Activated CD4-positive, alpha-beta memory T cell treated with anti-CD3 and anti-CD28 coated beads for 36 hours (primary cell): ENCODE measurements at regions of chr2 and their contacts with region 1.

Region 1: DNA sequence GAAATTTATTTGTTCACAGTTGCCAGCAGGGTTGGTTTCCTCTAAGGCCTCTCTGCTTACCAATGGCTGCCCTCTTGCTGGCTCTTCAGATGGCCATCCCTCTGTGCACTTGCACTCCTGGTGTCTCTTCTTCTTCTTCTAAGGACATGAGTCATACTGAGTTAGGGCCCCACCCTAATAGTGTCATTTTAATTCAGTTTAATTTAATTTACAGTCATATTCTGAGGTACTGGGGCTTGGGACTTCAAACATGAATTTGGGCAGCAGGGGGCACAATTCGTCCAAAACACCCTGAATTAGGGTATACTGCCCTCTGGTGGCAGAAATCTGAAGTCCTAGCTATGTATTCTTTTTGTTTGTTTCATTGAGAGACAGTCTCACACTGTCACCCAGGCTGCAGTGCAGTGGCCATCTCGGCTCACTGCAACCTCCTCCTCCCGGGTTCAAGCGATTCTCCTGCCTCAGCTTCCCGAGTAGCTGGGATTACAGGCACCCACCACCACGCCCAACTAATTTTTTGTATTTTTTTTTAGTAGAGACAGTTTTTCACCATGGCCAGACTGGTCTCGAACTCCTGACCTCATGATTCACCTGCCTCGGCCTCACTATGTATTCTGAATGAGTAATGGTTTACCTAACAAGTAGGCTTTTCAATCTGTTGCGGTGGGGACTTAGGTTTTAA is 19.8 kb downstream of the SLC4A1AP start:
- DNase-seq: peak; percentile 90
- H3K4me3 Mint-ChIP-seq: no peak overlapping the region
- H3K27ac Mint-ChIP-seq: peak overlapping the region; percentile 76
- H3K4me1 Mint-ChIP-seq: peaks cover 41% of the 10 kb centered on the region
- H3K27me3 Mint-ChIP-seq: no peaks in the 10 kb centered on the region

Region 2: DNA sequence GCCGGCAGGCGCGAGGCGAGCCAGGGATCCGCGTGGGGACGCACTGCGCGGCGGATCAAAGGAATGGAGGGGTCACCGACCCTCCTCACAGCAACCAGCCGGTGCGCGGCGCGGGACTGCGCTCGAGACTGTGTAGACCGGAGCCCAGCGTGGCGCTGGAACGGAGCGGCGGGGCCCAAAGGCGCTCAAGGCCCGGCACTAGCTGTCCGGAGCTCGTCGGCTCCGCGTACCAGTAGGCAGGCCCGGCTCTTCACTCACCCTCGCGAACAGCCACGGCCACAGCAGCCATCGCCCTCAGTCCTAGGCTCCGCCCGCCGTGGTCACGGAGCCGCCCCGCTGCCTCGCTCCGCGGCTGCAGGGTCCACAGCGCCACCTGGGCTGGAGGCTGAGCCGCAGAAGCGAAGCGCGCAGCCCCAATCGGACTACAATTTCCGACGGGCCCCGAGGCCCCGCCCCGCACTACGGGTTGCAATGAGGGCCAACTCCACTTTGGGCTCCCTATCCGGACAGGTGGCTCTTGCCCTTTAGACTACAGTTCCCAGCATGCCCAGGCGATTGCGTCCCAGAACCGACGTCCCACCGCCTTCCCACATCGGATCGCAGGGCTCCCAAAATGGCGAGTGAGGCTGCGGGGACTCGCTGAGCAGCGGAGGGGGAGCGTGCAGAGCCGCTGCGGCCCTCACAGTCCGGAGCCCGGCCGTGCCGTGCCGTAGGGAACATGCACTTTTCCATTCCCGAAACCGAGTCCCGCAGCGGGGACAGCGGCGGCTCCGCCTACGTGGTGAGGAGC is 313.3 kb before region 1 on chr2 and contains the starts of genes EIF2B4 and SNX17:
- CTCF ChIA-PET with region 1: interaction called, 38 read pairs
- POLR2A ChIA-PET with region 1: no interaction called
- intact Hi-C with region 1: loop called (anchors 2 kb)
- DNase-seq: peak; percentile 100
- H3K4me3 Mint-ChIP-seq: peak within 1 kb of the TSS; percentile 87
- H3K27ac Mint-ChIP-seq: peak within 1 kb of the TSS; percentile 96
- H3K4me1 Mint-ChIP-seq: peaks cover 29% of the 10 kb centered on the region
- H3K27me3 Mint-ChIP-seq: no peaks in the 10 kb centered on the region
- total RNA-seq, gene EIF2B4: 34.6 to 36.5 TPM
- total RNA-seq, gene SNX17: 91.2 to 93.2 TPM

Region 3: GRCh38 chr2:27428213-27428977 is 255.1 kb before region 1 on chr2 and contains the start of gene NRBP1:
- CTCF ChIA-PET with region 1: interaction called, 53 read pairs
- POLR2A ChIA-PET with region 1: interaction called, 3 read pairs
- intact Hi-C with region 1: loop called (anchors 1 kb)
- DNase-seq: peak; percentile 94
- H3K4me3 Mint-ChIP-seq: peak within 1 kb of the TSS; percentile 99
- H3K27ac Mint-ChIP-seq: peak within 1 kb of the TSS; percentile 98
- H3K4me1 Mint-ChIP-seq: peaks cover 35% of the 10 kb centered on the region
- H3K27me3 Mint-ChIP-seq: no peaks in the 10 kb centered on the region
- total RNA-seq, gene NRBP1: 80.8 to 82.7 TPM

Region 4: GRCh38 chr2:27566628-27567027 is 116.9 kb before region 1 on chr2:
- CTCF ChIA-PET with region 1: no interaction called
- POLR2A ChIA-PET with region 1: no interaction called
- intact Hi-C with region 1: no loop called
- DNase-seq: no peak
- H3K4me3 Mint-ChIP-seq: no peak overlapping the region
- H3K27ac Mint-ChIP-seq: no peak overlapping the region
- H3K4me1 Mint-ChIP-seq: no peaks in the 10 kb centered on the region
- H3K27me3 Mint-ChIP-seq: peaks cover 38% of the 10 kb centered on the region

Region 5: GRCh38 chr2:27638037-27638637 is 45.4 kb before region 1 on chr2:
- CTCF ChIA-PET with region 1: interaction called, 48 read pairs
- POLR2A ChIA-PET with region 1: interaction called, 15 read pairs
- intact Hi-C with region 1: loop called (anchors 1 kb)
- DNase-seq: no peak
- H3K4me3 Mint-ChIP-seq: peak overlapping the region; percentile 33
- H3K27ac Mint-ChIP-seq: peak overlapping the region; percentile 99
- H3K4me1 Mint-ChIP-seq: peaks cover 35% of the 10 kb centered on the region
- H3K27me3 Mint-ChIP-seq: no peaks in the 10 kb centered on the region

Region 6: DNA sequence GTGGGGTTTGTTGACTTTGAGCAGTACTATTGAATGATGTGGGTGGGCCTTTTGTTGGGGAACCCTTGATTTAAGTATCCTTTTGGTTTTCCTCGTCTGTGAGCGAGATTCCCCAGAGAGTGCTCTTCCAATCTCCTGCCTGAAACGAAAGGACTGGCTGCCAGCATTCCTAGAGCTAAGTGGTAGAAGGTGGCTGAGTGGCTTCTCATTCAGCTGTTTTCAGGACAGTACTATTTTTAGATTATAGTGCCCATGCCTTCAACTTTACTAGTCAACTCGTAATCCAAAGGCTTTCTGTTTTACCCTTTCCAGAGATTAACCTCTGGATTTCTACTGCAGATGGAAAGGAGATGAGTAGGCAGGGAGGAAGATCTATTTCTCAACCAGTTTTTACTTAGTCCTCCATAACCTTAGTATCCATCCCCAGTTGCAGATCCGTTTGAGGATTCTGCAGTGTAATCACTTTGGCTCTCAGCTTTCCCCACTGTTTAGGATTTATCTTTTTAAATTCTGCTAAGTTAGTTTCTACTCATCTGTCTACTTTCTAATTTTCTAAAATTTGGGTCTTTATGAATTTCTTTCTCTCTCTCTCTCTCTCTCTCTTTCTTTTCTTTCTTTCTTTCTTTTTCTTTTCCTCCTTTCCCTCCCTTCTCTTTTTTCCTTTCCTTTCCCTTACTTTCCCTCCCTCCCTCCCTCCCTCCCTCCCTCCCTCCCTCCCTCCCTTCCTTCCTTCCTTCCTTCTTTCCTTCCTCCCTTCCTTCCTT is 10.6 kb before region 1 on chr2:
- CTCF ChIA-PET with region 1: interaction called, 24 read pairs
- POLR2A ChIA-PET with region 1: no interaction called
- intact Hi-C with region 1: no loop called
- DNase-seq: no peak
- H3K4me3 Mint-ChIP-seq: no peak overlapping the region
- H3K27ac Mint-ChIP-seq: no peak overlapping the region
- H3K4me1 Mint-ChIP-seq: peaks cover 11% of the 10 kb centered on the region
- H3K27me3 Mint-ChIP-seq: no peaks in the 10 kb centered on the region

Region 7: GRCh38 chr2:28445448-28446258 is 762.1 kb after region 1 on chr2:
- CTCF ChIA-PET with region 1: interaction called, 10 read pairs
- POLR2A ChIA-PET with region 1: no interaction called
- intact Hi-C with region 1: no loop called
- DNase-seq: peak; percentile 86
- H3K4me3 Mint-ChIP-seq: peak overlapping the region; percentile 14
- H3K27ac Mint-ChIP-seq: peak overlapping the region; percentile 99
- H3K4me1 Mint-ChIP-seq: peaks cover 82% of the 10 kb centered on the region
- H3K27me3 Mint-ChIP-seq: peaks cover 4% of the 10 kb centered on the region